ENCODE measurements at regions of chr19 and their contacts with region 1.

Region 1: DNA sequence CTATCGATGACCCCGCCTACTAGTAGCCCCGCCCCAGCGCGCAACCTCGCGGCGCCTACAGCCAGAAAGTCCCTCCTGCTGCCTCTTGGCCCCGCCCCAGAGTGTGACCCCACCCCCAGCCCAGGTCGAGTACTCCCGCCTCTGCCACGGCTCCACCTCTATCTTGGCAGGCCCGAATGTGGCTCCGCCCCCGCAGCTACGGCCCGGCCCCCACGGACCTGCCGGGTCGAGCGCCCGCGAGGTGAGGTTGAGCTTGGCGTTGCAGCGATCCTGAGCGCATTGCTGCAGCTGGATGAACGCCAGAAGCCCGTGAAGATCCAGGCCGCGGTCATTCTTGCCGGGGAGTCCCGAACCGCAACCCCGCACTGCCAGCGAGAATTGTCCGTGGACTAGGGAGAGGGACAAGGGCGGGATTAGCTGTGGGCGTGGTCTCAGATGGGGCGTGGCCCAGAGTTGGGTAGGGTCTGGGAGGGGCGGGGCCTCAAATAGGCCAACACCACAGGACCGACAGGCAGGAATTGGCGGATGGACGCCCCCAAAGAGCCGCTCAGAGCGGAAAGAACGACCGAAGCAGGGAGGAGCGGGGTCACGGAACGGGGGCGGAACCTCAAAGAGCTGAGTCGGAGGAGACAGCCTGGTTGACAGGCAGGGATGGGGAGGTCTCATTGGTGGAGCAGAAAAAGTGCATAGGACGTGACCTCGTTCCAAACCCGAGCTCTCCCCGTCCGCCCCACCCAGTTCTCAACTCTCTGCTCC is 1.8 kb downstream of the LYPD3 start:
- DNase-seq: peak; percentile 97 to 99 (median 98)
- H3K4me3 ChIP-seq: peak overlapping the region; percentile 61
- H3K27ac ChIP-seq: peak overlapping the region; percentile 78 to 92
- H3K4me1 ChIP-seq: no peaks in the 10 kb centered on the region
- H3K27me3 ChIP-seq: no peaks in the 10 kb centered on the region
- CTCF ChIP-seq: no peak
- EP300 ChIP-seq: no peak
- POLR2A ChIP-seq: no peak

Region 2: DNA sequence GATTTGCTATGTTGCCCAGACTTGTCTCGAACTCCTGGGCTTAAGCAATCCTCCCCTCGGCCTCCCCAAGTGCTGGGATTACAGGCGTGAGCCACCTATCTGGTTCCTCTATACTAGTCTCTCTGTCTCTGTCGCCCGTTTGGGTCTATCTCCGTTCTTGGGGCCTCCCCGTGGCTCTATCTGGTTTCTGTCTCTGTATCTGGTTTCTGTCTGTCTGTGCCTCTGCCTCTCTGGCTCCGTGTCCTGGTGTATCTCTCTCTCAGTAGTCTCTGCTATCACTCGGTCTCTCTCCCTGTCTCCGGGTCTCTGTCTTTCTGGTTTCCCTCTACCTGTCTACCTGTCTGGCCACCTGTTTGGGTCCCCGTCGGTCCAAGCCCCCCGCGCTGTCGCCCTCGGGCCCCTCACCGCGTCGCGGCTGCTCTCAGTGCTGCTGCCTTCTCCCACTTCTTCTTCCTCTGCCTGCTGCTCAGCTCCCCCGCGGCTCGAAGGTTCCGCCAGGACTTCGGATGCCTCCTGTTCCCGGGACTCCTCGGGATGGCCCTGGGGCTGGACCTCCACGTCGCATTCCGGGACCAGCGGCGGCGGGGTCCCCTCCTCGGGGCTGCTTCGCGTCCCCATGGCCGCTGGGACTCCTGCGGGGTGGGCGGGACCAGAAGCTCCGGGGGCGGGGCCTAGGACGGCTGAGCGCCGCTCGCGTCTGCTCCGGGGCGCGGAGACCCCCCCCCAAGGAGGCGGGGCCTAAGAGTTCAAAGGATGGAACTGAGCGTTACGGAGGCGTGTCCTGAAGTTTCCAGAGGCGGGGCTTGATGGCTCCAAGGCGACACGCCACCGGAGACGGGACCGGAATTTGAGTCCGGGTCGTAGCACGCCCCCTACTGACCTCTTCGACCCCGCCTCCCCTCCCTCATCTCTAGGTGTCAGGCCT is 40.2 kb after region 1 on chr19:
- intact Hi-C with region 1: loop called in 1 of 4 experiments (anchors 5 kb)
- DNase-seq: peak; percentile 98 to 99 (median 99)
- H3K4me3 ChIP-seq: peak overlapping the region; percentile 80
- H3K27ac ChIP-seq: peak overlapping the region; percentile 61 to 83
- H3K4me1 ChIP-seq: peaks cover 2% of the 10 kb centered on the region
- H3K27me3 ChIP-seq: no peaks in the 10 kb centered on the region
- CTCF ChIP-seq: no peak
- EP300 ChIP-seq: no peak
- POLR2A ChIP-seq: peak; percentile 46

Region 3: DNA sequence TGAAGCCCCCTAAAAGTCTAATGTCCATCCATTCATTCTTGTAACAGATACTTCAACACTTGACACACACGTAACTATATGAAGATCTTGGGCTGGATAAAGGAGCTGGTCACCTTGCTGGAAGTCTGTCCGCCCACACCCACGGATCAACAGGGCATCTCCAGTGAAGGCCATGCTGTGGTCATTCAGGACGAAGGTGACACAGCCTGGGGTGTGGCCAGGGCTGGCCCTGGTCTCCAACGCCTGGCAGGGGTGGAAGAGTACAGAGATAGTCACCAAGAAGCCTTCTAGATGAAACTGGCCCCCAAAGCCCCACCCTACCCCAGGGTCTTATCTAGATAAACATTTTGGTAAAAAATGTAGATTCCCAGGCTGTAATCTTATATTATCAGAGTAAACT is 47.8 kb after region 1 on chr19:
- intact Hi-C with region 1: loop called in 1 of 4 experiments (anchors 5 kb)
- DNase-seq: no peak
- H3K4me3 ChIP-seq: no peak overlapping the region
- H3K27ac ChIP-seq: no peak overlapping the region
- H3K4me1 ChIP-seq: no peaks in the 10 kb centered on the region
- H3K27me3 ChIP-seq: no peaks in the 10 kb centered on the region
- CTCF ChIP-seq: no peak
- EP300 ChIP-seq: no peak
- POLR2A ChIP-seq: no peak

Region 4: DNA sequence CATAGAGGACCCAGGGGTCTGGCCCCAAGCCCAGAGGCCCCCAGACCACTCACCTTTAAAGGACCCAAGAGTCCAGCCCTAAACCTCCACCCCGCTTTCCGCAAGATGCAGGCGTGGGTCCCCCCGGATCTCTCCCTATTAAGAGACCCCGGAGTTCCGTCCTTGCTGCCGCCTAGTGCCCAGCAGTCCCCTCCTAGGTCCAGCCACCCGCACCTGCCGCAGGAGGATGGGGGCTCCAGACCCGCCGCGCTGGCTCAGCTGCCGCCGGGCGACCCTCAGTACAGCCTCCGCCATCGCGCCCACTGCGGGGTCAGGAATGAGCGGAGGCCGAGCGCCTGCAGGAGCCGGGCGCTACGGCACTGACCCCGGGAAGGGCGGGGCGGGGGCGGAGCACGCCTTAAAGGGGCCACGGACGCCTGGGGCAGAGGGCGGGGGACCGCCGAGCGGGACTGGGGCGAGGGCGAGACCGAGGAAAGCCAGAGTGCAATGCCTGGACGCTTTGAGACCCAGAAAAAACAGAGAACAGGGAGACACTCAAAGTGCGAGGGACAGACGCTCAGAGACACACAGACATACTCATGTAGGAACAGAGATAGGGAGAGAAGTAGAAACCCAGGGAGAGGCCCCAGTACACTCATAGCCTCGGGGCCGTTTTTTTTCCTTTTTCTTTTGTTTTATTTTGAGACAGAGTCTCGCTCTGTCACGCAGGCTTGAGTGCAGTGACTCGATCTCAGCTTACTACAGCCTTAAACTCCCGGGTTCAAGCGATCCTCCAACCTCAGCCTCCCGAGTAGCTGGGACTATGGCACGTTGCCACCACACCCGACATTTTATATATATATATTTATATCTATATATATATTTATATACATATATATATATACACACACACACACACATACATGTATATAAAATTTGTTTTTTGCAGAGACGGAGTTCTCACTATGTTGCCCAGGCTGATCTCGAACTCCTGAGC is 63.6 kb after region 1 on chr19 and contains the start of gene ETHE1:
- intact Hi-C with region 1: loop called in 1 of 4 experiments (anchors 5 kb)
- DNase-seq: peak; percentile 66 to 83 (median 80)
- H3K4me3 ChIP-seq: peak within 1 kb of the TSS; percentile 87
- H3K27ac ChIP-seq: peak within 1 kb of the TSS; percentile 54 to 72
- H3K4me1 ChIP-seq: peaks cover 6% of the 10 kb centered on the region
- H3K27me3 ChIP-seq: no peaks in the 10 kb centered on the region
- CTCF ChIP-seq: no peak
- EP300 ChIP-seq: no peak
- POLR2A ChIP-seq: peak; percentile 58
- total RNA-seq, gene ETHE1: 16.1 to 28.5 (median 22.5) TPM